ENCODE measurements at regions of chr21 and their contacts with region 1.

Region 1: DNA sequence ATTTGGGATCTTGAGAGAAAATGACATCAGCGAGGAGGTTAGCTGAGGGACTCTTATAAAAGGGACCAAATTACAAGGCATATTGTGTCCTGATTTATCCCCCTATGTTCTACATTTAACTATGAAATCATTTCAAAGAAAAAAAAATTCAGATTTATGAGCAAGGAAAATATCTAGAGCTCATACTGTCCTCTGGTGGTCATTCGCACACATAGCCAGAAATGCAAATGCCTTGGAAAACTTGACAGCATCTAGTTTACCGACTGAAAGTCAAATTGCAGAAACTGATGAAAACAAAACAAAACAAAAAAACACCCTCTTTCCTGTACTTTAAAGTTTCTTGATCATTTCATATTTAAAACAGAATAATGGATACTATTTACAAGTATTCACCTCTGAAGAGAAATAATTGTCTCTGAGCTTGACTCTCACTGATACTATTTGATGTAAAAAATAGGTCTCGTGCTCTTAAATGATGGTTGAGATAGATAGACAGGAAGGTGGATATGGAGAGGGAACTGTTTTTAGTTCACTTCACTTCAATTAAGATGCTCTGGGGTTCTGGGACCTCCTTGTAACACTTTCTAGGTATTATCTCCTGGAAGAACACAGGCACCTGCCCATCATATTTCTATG is 253.8 kb downstream of the PCP4 start:
- H3K4me3 ChIP-seq: no peak overlapping the region
- H3K27ac ChIP-seq: no peak overlapping the region
- H3K4me1 ChIP-seq: no peaks in the 10 kb centered on the region
- CTCF ChIP-seq: peak; percentile 44; the same call in 1 of the 2 replicates

Region 2: GRCh38 chr21:39782826-39783225 is 338.2 kb before region 1 on chr21:
- CTCF ChIA-PET with region 1: interaction called, 96 read pairs
- POLR2A ChIA-PET with region 1: no interaction called
- H3K4me3 ChIP-seq: no peak overlapping the region
- H3K27ac ChIP-seq: no peak overlapping the region
- H3K4me1 ChIP-seq: no peaks in the 10 kb centered on the region
- CTCF ChIP-seq: no peak

Region 3: GRCh38 chr21:39867198-39867650 is 253.8 kb before region 1 on chr21 and contains the start of gene PCP4:
- CTCF ChIA-PET with region 1: interaction called, 126 read pairs
- POLR2A ChIA-PET with region 1: interaction called, 3 read pairs
- H3K4me3 ChIP-seq: no peak within 1 kb of the TSS
- H3K27ac ChIP-seq: no peak within 1 kb of the TSS
- H3K4me1 ChIP-seq: peaks cover 6% of the 10 kb centered on the region; the same call in 1 of the 2 replicates
- CTCF ChIP-seq: peak; percentile 61

Region 4: DNA sequence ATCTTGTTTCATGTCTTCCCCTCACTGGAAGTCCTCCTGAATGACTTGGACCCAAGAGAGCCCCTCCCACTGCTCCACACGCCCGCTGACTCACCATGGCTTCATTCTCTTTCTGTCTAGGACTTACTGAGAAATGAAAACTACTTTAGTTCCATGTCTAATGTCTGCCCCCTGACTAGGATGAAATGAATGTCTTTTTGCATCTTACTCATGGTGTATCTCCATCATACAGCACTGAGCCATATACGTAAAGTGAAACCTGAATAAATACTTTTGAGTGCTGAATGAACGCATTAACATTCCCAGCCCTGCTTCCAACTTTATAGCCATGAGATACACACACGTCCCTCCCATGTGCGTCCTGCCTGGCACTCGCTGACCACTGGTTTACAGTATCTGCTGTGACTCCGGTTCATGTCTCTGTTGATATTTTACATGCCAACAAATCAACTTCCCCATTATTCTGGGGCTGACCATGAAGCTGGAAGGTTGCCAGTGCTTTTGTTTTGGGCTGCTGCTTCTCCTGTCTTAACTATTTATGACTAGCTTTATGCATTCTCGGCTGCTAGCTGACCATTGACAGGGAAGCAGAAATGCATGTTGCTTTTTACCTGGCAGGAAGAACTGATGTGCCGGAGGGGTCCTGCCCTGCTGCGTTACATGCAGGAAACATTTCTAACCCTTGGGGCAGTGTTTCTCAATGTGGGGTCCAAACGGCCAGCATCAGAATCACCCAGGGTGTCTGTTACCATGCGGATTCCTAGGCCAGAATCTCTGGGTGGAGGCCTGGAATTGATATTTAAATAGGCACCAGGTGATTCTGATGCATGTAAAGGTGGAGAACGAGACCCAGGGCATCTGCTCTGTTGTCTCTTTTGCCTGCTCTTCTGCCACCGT is 71.4 kb before region 1 on chr21:
- CTCF ChIA-PET with region 1: interaction called, 88 read pairs
- POLR2A ChIA-PET with region 1: no interaction called
- H3K4me3 ChIP-seq: no peak overlapping the region
- H3K27ac ChIP-seq: no peak overlapping the region
- H3K4me1 ChIP-seq: peaks cover 21% of the 10 kb centered on the region
- CTCF ChIP-seq: no peak

Region 5: DNA sequence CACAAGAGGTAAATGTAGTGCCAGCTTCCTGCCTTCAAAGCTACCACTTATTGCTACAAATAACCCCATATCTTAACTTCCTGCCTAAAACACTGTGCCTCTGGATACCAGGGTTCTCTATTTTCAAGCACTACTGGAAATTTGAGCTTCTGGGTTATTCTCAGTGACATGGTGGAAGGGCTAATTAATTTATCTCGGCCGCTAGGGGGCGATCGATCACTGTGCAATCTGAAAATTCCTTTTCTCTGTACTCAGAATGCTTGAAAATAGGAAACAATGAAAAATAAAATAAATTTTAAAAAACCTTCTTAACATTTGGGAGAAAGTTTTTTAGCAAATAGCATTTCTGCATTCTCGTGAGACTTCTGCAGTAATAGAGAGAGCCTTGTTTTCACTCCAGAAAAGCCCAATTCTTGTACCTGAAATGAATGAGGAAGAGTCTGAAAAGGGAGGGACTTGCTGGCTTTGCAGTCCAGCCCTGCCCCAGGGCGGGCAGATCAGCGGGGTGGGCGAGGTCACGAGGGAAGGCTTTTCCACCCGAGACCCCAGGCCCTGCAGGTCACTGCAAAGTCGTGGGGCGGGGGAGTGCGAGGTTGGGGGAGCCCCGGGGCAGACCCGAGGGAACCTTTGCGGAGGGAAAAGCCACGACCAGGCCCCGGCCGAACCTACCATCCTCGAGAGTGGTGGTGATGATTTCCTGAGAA is 22.9 kb after region 1 on chr21:
- CTCF ChIA-PET with region 1: interaction called, 14 read pairs
- POLR2A ChIA-PET with region 1: no interaction called
- H3K4me3 ChIP-seq: no peak overlapping the region
- H3K27ac ChIP-seq: no peak overlapping the region
- H3K4me1 ChIP-seq: no peaks in the 10 kb centered on the region
- CTCF ChIP-seq: no peak

Region 6: GRCh38 chr21:40421121-40421520 is 300.1 kb after region 1 on chr21:
- CTCF ChIA-PET with region 1: no interaction called
- POLR2A ChIA-PET with region 1: no interaction called
- H3K4me3 ChIP-seq: no peak overlapping the region
- H3K27ac ChIP-seq: no peak overlapping the region
- H3K4me1 ChIP-seq: no peaks in the 10 kb centered on the region
- CTCF ChIP-seq: no peak

Region 7: DNA sequence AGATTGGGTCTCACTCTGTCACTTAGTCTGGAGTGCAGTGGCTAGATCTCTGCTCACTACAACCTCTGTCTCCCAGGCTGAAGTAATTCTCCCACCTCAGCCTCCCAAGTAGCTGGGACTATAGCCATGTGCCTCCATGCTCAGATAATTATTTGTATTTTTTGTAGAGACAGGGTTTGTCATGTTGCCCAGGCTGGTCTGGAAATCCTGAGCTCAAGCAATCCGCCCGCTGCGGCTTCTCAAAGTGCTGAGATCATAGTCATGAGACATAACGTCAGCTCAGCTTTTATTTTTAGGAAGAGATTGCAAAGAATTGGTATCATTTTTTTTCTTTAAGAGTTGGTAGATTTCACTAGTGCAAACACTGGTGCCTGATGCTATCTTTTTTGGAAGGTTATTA is 481.0 kb after region 1 on chr21:
- CTCF ChIA-PET with region 1: no interaction called
- POLR2A ChIA-PET with region 1: no interaction called
- H3K4me3 ChIP-seq: no peak overlapping the region
- H3K27ac ChIP-seq: no peak overlapping the region
- H3K4me1 ChIP-seq: no peaks in the 10 kb centered on the region
- CTCF ChIP-seq: no peak

Measured in HEK293 (cell line).